Activated CD4-positive, alpha-beta memory T cell treated with anti-CD3 and anti-CD28 coated beads, Interleukin-2, amount 10 ng/mL, durations not matched to agents 7 days and 5 days (primary cell): ENCODE measurements at regions of chr2 and their contacts with region 1.

Region 1: DNA sequence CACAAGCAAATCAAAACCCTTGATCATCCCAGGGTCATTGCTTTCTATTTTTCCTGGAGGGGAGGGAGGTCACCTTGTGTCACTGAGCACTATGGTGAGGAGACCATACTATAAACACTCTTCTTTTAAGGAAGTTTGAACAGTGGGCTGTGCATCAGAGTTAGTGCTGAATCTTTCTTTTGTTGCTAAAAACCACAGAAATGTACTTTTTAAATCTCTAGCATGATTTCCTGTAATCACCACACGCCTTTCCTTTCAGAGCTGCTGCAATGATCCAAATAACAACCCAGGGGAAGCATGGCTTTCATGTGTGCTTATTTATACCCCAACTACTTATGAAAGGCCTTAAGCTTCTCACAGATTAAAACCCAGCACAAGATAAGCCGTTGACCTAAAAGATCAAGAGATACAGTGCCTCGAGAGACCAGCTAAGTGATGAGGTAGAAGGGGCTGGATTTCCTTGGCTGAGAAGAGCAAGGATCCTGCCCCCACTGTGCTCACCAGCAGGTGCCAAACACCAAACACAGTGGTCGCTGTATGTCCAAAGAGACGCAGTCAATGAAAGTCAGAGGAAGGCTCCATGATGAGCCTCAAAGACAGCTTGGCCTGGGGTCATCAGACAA is 34.7 kb downstream of the TRABD2A start:
- DNase-seq: peak; percentile 41
- H3K4me3 Mint-ChIP-seq: peak overlapping the region; percentile 19
- H3K27ac Mint-ChIP-seq: peak overlapping the region; percentile 96
- H3K4me1 Mint-ChIP-seq: peaks cover 91% of the 10 kb centered on the region
- H3K27me3 Mint-ChIP-seq: no peaks in the 10 kb centered on the region

Region 2: DNA sequence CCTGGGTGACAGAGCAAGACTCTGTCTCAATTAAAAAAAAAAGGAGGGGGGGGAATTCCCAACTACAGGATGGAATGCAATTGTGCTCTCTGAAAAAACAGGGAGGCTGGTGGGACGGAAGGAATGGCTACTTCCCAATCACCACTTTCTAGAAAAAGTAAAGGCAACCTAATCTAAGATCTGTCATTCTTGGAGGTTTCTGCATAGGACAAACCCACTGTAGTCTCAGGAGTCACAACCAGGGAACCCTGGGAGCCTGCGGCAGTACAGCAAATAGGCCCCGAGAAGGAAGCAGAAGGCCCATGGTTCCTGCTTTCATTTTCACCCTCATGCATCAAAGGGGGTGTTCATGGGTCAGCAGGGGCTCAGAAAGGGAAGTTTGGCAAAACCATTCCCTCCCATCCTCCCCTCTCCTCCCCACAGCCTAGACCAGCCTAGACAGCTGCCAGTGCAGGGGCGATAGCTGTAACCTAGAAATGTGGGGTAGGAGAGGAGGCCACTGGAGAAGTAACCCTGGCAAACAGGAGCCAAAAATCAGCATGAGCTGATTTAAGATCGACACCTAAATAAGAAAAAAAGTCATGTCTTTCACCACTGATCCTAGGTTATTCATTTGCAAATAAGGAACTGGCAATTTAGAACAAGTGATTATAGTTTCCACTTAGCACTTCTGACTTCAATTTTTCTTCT is 13.2 kb before region 1 on chr2:
- CTCF ChIA-PET with region 1: interaction called, 3 read pairs
- POLR2A ChIA-PET with region 1: interaction called, 17 read pairs
- DNase-seq: peak; percentile 29
- H3K4me3 Mint-ChIP-seq: peak overlapping the region; percentile 55
- H3K27ac Mint-ChIP-seq: peak overlapping the region; percentile 87
- H3K4me1 Mint-ChIP-seq: peaks cover 43% of the 10 kb centered on the region
- H3K27me3 Mint-ChIP-seq: no peaks in the 10 kb centered on the region

Region 3: GRCh38 chr2:84856787-84857186 is 10.6 kb after region 1 on chr2:
- CTCF ChIA-PET with region 1: interaction called, 5 read pairs
- POLR2A ChIA-PET with region 1: interaction called, 35 read pairs
- DNase-seq: peak; percentile 58
- H3K4me3 Mint-ChIP-seq: no peak overlapping the region
- H3K27ac Mint-ChIP-seq: peak overlapping the region; percentile 70
- H3K4me1 Mint-ChIP-seq: peaks cover 77% of the 10 kb centered on the region
- H3K27me3 Mint-ChIP-seq: no peaks in the 10 kb centered on the region

Region 4: DNA sequence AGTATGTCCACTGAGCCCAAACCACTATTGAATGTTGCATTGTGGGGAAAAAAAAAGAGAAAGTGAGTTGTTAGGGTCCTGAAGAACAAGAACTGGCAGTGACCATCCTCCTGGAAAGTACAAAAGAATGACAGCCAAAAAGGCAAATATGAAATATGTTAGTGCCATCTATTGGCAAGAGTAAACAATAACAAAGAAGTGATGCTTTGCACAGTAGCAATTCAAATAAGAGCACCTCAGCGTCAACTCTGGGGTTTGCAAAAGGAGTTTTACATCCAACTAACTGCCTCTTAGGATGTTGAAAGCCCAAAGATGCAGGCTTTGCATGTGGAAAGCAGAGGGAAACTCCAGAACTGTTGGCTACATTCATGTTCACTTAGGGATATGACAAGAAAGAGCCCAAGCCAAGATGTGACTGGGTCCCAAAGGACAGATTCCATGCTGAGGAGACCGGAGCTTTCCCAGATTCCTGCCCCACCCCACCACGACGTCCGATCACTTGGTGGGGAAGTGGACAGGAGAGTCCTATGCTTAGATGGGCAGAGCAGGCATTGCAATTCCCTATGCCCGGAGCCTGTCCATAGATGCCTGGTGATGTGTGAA is 19.1 kb after region 1 on chr2:
- CTCF ChIA-PET with region 1: interaction called, 4 read pairs
- POLR2A ChIA-PET with region 1: interaction called, 35 read pairs
- DNase-seq: no peak
- H3K4me3 Mint-ChIP-seq: no peak overlapping the region
- H3K27ac Mint-ChIP-seq: no peak overlapping the region
- H3K4me1 Mint-ChIP-seq: peaks cover 43% of the 10 kb centered on the region
- H3K27me3 Mint-ChIP-seq: no peaks in the 10 kb centered on the region

Region 5: DNA sequence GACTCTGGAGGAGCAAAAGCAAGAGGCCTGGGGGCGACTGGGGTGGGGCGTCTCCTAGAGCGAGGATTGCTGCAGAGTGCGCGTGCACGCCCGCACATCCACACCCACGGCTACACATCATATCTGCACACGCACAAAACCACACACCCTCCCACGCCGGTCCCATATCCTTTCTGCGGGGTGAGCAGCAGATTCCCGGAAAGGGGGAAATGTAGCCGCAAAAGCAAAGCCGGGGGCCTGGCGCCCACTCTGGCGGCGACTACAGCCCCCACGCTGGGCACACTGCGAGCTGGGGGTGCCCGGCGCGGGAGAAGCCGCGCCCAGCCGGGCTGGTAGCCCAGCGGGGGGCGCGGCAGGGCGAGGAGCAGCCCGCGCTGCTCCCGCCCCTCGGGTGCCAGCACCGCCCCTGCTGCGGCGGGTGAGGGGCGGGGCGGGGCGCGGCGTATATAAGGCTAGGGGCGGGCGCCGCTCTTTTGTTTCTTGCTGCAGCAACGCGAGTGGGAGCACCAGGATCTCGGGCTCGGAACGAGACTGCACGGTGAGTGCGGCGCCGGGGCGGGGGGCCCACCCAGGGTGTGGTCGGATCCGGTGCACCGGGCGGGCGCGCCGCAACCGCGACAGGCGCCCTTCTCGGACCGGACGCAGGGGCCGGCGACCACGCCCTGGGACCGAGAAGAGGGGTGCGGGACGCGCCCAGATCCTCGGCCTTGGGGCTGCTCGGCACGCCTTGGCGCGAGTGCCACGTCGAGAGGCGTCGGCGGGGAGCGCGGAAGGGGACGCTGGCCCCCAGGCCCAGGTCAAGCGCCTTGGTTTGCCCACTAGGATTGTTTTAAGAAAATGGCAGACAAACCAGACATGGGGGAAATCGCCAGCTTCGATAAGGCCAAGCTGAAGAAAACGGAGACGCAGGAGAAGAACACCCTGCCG is 59.3 kb after region 1 on chr2 and contains the start of gene TMSB10:
- CTCF ChIA-PET with region 1: no interaction called
- POLR2A ChIA-PET with region 1: interaction called, 40 read pairs
- DNase-seq: peak; percentile 91
- H3K4me3 Mint-ChIP-seq: peak within 1 kb of the TSS; percentile 89
- H3K27ac Mint-ChIP-seq: peak within 1 kb of the TSS; percentile 94
- H3K4me1 Mint-ChIP-seq: peaks cover 67% of the 10 kb centered on the region
- H3K27me3 Mint-ChIP-seq: no peaks in the 10 kb centered on the region
- total RNA-seq, gene TMSB10: 5,686 to 5,768 TPM

Region 6: GRCh38 chr2:84918430-84918829 is 72.3 kb after region 1 on chr2:
- CTCF ChIA-PET with region 1: no interaction called
- POLR2A ChIA-PET with region 1: no interaction called
- DNase-seq: no peak
- H3K4me3 Mint-ChIP-seq: no peak overlapping the region
- H3K27ac Mint-ChIP-seq: peak overlapping the region; percentile 7
- H3K4me1 Mint-ChIP-seq: peaks cover 30% of the 10 kb centered on the region
- H3K27me3 Mint-ChIP-seq: no peaks in the 10 kb centered on the region